B cell (primary cell): ENCODE measurements at regions of chr6 and their contacts with region 1.

Region 1: DNA sequence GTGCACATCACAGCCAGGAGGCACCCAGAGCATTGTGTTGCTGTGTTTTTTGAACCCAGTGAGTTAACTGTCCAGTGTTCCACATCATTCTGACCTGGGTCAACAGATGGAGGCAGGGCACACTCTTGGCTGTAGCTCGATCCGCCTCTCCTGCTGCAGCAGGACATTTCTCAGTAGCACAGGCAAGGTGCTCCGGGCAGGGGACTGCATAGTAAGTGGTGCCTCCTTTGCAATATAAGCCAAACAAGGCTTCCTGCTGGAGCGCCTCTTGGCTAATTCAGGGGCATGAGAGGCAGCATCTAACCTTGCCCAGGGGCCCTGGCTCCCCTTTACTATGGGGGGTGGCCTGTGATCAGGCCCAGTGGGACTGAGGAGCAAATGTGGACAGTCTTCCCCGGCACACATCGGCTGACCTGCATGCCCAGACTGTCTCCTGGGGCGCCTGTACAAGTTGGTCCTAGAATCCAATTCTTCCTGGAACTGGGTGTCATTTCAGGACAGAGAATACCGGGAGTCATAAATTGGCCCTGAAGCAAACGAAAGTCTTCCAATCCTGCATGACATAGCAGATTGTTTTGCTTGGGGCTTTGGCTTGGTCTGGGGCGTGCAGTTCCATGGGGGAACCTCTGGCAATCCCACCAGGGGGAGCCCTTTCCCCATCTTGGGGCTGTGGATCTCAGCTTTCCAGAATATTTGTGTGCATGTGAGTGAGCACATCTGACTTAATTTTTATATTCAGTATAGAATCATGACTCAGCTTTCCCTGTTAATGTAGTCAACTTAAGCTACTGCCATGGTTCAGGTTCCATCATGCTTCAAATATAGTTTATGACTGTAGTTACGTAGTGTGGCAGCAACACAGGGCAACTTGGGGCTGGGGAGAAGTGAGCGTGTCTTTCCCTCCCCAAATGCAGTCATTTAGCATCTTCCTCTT is 56.0 kb upstream of the DDR1 start:
- DNase-seq: peak; percentile 77
- ATAC-seq: peak; percentile 92
- H3K4me3 ChIP-seq: no peak overlapping the region
- H3K4me3 Mint-ChIP-seq: no peak overlapping the region
- H3K27ac ChIP-seq: no peak overlapping the region
- H3K27ac Mint-ChIP-seq: no peak overlapping the region
- H3K4me1 ChIP-seq: peaks cover 7 to 23% of the 10 kb centered on the region in 2 donors
- H3K4me1 Mint-ChIP-seq: peaks cover 24% of the 10 kb centered on the region
- H3K27me3 ChIP-seq: no peaks in the 10 kb centered on the region
- H3K27me3 Mint-ChIP-seq: peaks cover 12% of the 10 kb centered on the region
- CTCF ChIP-seq: peak; percentile 89

Region 2: GRCh38 chr6:30877419-30878371 is 49.4 kb after region 1 on chr6:
- CTCF ChIA-PET with region 1: interaction called, 53 read pairs
- POLR2A ChIA-PET with region 1: no interaction called
- intact Hi-C with region 1: loop called (anchors 1 kb)
- DNase-seq: peak; percentile 79
- ATAC-seq: peak; percentile 82
- H3K4me3 ChIP-seq: peak overlapping the region in 1 of 5 experiments; percentile 21
- H3K4me3 Mint-ChIP-seq: peak overlapping the region; percentile 48
- H3K27ac ChIP-seq: peak overlapping the region in 1 of 2 donors; percentile 44
- H3K27ac Mint-ChIP-seq: peak overlapping the region; percentile 54
- H3K4me1 ChIP-seq: peaks cover 27 to 28% of the 10 kb centered on the region in 2 donors
- H3K4me1 Mint-ChIP-seq: peaks cover 37% of the 10 kb centered on the region
- H3K27me3 ChIP-seq: no peaks in the 10 kb centered on the region
- H3K27me3 Mint-ChIP-seq: peaks cover 3% of the 10 kb centered on the region
- CTCF ChIP-seq: peak; percentile 82

Region 3: GRCh38 chr6:30907758-30908591 is 79.7 kb after region 1 on chr6 and contains the start of gene GTF2H4:
- CTCF ChIA-PET with region 1: interaction called, 87 read pairs
- POLR2A ChIA-PET with region 1: no interaction called
- intact Hi-C with region 1: no loop called
- DNase-seq: peak; percentile 95
- ATAC-seq: peak; percentile 97
- H3K4me3 ChIP-seq: peak within 1 kb of the TSS; percentile 71 to 99 (median 89)
- H3K4me3 Mint-ChIP-seq: peak within 1 kb of the TSS; percentile 100
- H3K27ac ChIP-seq: peak within 1 kb of the TSS in 1 of 2 donors; percentile 43
- H3K27ac Mint-ChIP-seq: peak within 1 kb of the TSS; percentile 88
- H3K4me1 ChIP-seq: peaks cover 14 to 28% of the 10 kb centered on the region in 2 donors
- H3K4me1 Mint-ChIP-seq: peaks cover 21% of the 10 kb centered on the region
- H3K27me3 ChIP-seq: no peaks in the 10 kb centered on the region
- H3K27me3 Mint-ChIP-seq: no peaks in the 10 kb centered on the region
- CTCF ChIP-seq: no peak
- total RNA-seq, gene GTF2H4: 38.4 and 44.7 TPM in 2 replicates

Region 4: DNA sequence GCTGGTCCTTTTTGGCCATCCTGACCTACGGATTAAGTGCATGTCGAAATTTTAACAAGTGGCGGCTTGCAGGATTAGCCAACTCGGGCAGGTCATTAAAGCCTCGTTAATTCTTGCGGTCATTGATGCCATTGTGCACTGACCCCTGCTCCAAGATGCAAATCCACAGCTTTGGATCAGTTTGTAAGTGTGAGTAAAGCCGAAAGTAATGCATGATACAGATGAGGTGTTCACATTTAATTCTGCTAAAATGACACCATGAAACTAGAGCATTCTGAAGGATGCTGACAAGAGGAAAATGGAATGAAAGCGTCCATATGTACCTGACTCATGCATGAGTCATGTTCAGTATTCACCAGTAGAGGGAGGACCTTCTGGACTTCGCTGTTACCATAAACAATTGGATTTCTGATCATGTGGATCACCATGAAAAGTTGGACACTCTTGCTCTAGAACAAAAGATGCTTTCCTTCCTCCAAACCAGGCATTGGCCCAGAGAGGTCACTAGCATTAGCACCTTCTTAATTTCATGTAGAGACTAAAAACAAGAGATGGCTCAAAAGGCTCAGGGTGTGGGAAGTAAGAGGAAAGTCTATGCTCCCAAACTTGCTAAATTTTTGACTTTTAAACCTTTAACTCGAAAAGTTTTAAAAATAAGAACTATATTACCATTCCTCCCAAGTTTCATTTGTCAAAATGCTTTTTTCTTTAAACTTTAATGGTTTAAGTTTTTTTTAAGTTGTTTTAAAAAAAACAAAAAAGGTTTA is 230.0 kb after region 1 on chr6:
- CTCF ChIA-PET with region 1: interaction called, 14 read pairs
- POLR2A ChIA-PET with region 1: no interaction called
- intact Hi-C with region 1: no loop called
- DNase-seq: no peak
- ATAC-seq: no peak
- H3K4me3 ChIP-seq: no peak overlapping the region
- H3K4me3 Mint-ChIP-seq: no peak overlapping the region
- H3K27ac ChIP-seq: no peak overlapping the region
- H3K27ac Mint-ChIP-seq: no peak overlapping the region
- H3K4me1 ChIP-seq: no peaks in the 10 kb centered on the region
- H3K4me1 Mint-ChIP-seq: peaks cover 12% of the 10 kb centered on the region
- H3K27me3 ChIP-seq: peaks cover 0 to 4% (median 0%) of the 10 kb centered on the region in 4 experiments
- H3K27me3 Mint-ChIP-seq: no peaks in the 10 kb centered on the region
- CTCF ChIP-seq: no peak

Region 5: DNA sequence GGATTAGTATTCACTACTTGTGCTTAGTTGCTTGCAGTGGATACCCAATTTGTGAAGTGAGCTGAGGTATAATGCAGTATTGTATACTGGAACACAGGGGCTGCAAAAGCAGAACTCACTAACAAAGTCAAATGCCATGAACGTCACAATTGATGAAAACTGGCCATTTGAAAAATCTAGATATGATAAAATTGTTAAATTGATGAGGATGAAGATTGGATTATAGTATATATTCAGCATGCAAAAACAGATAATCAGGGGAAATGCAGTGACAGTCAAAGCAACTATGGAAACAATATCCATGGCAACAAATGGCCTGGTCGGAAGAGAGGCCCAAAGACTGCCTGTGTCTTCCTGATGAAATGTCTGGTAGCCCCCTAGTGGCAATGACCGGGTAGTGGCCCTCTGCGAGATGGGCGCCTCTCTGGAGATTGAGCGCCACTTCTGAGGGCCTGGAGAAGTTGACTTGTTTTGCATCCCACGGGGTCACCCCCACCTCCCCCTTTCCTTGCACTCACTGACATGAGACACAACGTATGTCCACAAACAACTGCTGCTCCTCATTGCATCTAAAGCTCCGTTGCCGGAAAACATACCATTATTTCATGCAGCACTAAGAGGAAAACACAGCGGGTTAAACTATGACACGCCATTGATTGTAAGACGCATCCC is 240.5 kb after region 1 on chr6:
- CTCF ChIA-PET with region 1: interaction called, 38 read pairs
- POLR2A ChIA-PET with region 1: interaction called, 11 read pairs
- intact Hi-C with region 1: loop called (anchors 1 kb)
- DNase-seq: peak; percentile 82
- ATAC-seq: peak; percentile 98
- H3K4me3 ChIP-seq: no peak overlapping the region
- H3K4me3 Mint-ChIP-seq: no peak overlapping the region
- H3K27ac ChIP-seq: no peak overlapping the region
- H3K27ac Mint-ChIP-seq: no peak overlapping the region
- H3K4me1 ChIP-seq: no peaks in the 10 kb centered on the region
- H3K4me1 Mint-ChIP-seq: peaks cover 2% of the 10 kb centered on the region
- H3K27me3 ChIP-seq: peaks cover 0 to 2% (median 0%) of the 10 kb centered on the region in 4 experiments
- H3K27me3 Mint-ChIP-seq: no peaks in the 10 kb centered on the region
- CTCF ChIP-seq: peak; percentile 92

Region 6: DNA sequence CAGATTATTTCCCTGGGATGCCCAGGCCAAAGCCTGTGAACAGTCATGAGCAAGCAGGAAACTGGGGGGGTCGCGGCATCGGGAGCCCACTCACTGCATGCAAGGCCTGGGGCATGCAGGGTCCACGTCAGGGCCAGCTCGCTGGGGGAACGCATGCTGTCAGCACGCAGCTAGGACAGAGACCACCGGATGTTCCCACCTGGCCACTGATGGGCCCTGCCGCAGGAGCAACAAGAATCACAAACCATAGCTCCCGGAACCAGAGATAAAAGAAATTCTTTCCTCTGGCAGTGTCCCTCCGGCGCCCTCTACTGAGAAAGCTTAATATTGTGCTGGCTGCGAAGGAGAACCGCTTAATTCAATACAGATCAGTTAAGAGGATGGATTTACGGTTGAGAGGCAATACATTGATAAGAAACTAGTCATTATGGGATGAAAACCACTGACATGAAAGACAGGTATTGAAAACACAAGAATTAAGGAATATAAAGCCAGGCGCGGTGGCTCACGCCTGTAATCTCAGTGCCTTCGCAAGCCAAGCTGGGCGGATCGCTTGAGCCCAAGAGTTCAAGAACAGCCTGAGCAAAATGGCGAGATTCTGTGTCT is 251.5 kb after region 1 on chr6:
- CTCF ChIA-PET with region 1: interaction called, 107 read pairs
- POLR2A ChIA-PET with region 1: no interaction called
- intact Hi-C with region 1: loop called (anchors 1 kb)
- DNase-seq: peak; percentile 77
- ATAC-seq: peak; percentile 82
- H3K4me3 ChIP-seq: peak overlapping the region in 3 of 5 experiments; percentile 23 to 43 (median 34)
- H3K4me3 Mint-ChIP-seq: peak overlapping the region; percentile 73
- H3K27ac ChIP-seq: no peak overlapping the region
- H3K27ac Mint-ChIP-seq: no peak overlapping the region
- H3K4me1 ChIP-seq: peaks cover 4 to 5% of the 10 kb centered on the region in 2 donors
- H3K4me1 Mint-ChIP-seq: peaks cover 4% of the 10 kb centered on the region
- H3K27me3 ChIP-seq: no peaks in the 10 kb centered on the region
- H3K27me3 Mint-ChIP-seq: peaks cover 9% of the 10 kb centered on the region
- CTCF ChIP-seq: peak; percentile 94

Region 7: GRCh38 chr6:31087494-31088089 is 259.3 kb after region 1 on chr6:
- CTCF ChIA-PET with region 1: interaction called, 237 read pairs
- POLR2A ChIA-PET with region 1: no interaction called
- intact Hi-C with region 1: loop called (anchors 1 kb)
- DNase-seq: peak; percentile 89
- ATAC-seq: peak; percentile 95
- H3K4me3 ChIP-seq: no peak overlapping the region
- H3K4me3 Mint-ChIP-seq: no peak overlapping the region
- H3K27ac ChIP-seq: no peak overlapping the region
- H3K27ac Mint-ChIP-seq: no peak overlapping the region
- H3K4me1 ChIP-seq: no peaks in the 10 kb centered on the region
- H3K4me1 Mint-ChIP-seq: no peaks in the 10 kb centered on the region
- H3K27me3 ChIP-seq: no peaks in the 10 kb centered on the region
- H3K27me3 Mint-ChIP-seq: peaks cover 21% of the 10 kb centered on the region
- CTCF ChIP-seq: peak; percentile 84